ENCODE measurements at regions of chr19 and their contacts with region 1.

Region 1: DNA sequence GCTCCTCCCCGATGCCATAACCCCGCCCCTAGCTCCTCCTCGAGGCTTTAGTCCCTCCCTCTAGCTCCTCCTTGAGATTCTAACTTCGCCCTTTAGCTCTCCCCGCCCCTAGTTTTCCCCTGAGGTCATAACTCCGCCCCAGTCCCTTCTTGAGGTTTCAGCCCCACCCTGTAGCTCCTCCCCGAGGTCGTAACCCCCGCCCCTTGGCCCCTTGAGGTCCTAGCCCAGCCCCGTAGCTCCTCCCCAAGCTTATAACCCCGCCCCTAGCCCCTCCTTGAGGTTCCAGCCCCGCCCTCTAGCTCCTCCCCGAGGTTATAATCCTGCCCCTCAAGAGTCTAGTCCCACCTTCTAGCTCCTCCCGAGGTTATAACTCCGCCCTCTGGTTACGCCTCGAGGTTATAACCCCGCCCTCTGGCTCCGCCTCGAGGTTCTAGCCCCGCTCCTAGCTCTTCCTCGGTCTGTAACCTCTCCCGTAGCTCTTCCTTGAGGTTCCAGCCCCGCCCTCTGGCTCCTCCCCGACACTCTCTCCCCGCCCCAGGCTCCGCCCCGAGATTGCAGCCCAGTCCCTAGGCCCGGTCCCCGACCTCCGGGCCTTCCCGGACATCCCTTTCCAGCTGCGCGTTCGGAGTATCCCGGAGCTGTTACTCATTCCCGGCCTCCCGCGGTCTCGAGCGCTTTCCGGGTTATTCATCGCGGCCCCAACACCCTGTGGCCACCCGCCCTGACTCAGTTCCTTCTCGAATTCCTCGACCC is 1.4 kb downstream of the PLAUR start:
- DNase-seq: peak; percentile 100
- H3K4me3 ChIP-seq: peak overlapping the region; percentile 36 to 62 (median 56)
- H3K27ac ChIP-seq: peak overlapping the region; percentile 90 to 98 (median 92)
- H3K4me1 ChIP-seq: peaks cover 0 to 25% (median 20%) of the 10 kb centered on the region in 4 donors
- H3K27me3 ChIP-seq: no peaks in the 10 kb centered on the region
- CTCF ChIP-seq: no peak
- EP300 ChIP-seq: peak in 1 of 4 donors; percentile 25
- POLR2A ChIP-seq: peak; percentile 88 to 90

Region 2: DNA sequence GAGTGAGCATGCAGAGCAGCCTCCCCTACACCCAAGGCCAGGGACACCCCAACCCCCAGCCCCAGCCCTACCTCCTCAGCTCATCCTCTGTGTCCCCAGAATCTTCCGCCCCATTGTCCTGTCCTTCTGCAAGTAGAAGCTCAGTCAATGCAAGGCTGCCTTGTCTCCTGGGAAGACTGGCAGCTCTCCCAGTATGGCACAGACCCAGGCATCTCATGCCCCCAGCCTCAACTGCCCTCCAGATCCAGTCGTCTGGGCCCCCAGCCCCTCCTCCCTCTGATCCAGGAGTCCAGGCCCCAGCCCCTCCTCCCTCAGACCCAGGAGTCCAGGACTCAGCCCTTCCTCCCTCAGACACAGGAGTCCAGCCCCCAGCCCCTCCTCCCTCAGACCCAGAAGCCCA is 122.6 kb before region 1 on chr19:
- intact Hi-C with region 1: no loop called
- DNase-seq: no peak
- H3K4me3 ChIP-seq: no peak overlapping the region
- H3K27ac ChIP-seq: no peak overlapping the region
- H3K4me1 ChIP-seq: no peaks in the 10 kb centered on the region
- H3K27me3 ChIP-seq: no peaks in the 10 kb centered on the region
- CTCF ChIP-seq: no peak
- EP300 ChIP-seq: no peak
- POLR2A ChIP-seq: no peak

Region 3: DNA sequence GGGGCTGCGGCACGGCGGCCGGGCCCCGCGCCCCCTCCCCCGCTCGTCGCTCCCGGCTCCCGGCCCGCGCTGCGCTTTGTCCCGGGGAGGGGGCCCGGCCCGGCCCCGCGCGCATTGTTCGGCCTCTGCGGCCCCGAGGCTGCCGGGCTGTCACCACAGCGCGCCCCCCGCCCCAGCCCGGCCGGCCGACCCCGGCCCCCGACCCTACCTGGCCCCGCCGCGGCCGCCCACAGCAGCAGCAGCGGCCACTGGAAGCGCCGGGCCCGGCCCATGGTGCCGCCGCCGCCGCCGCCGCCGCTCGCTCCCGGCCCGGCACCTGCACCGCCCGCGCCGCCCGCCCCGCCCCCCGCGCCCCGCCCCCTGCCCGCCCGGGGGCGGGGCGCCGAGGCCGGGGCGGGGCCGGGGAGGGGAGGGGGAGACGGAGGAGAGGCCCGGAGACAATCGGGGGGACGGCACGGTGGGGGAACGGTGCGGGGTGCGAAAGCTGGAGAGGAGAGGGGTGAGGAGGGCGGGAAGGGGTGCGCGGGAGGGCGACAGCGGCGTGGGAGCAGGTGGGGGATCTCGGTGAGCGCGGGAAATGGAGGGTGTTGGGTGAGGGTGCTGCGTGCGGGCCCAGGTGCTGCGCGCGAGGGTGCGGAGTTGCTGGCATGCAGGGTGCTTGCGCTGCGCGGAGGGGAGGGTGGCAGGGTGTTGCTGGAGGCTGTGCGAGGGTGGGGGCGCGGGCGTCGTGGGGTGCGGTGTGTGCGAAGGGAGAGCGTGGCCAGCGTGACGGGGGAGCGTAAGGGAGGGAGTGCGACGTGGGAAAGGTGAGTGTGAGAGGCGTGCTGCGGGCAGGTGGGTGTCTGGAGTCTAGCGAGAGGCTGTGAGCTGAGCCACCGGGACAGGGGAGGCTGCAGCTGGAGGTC is 28.8 kb before region 1 on chr19 and contains the start of gene CADM4:
- intact Hi-C with region 1: loop called (anchors 2 kb)
- DNase-seq: peak; percentile 69
- H3K4me3 ChIP-seq: peak within 1 kb of the TSS; percentile 56 to 69 (median 62)
- H3K27ac ChIP-seq: peak within 1 kb of the TSS; percentile 54 to 73 (median 63)
- H3K4me1 ChIP-seq: peaks cover 0 to 19% (median 14%) of the 10 kb centered on the region in 4 donors
- H3K27me3 ChIP-seq: no peaks in the 10 kb centered on the region
- CTCF ChIP-seq: no peak
- EP300 ChIP-seq: no peak
- POLR2A ChIP-seq: no peak
- total RNA-seq, gene CADM4: 16.4 to 21.7 (median 19.7) TPM

Region 4: DNA sequence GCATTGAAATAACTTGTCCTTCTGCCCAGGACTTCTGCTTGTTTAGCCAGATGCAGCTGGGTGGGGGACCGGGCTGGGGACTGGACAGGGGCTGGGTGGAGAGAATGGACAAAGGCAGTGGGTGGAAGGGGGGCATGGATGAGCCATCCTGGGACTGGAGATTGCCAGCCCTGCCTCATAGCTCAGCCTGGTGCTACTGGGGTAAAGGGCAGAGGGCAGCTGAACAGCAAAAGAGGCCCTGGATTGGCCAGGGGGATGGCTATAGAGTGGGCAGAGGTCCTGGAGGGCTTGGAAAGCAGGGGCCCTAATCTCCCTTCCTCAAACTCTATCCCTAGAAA is 19.0 kb after region 1 on chr19:
- intact Hi-C with region 1: no loop called
- DNase-seq: no peak
- H3K4me3 ChIP-seq: no peak overlapping the region
- H3K27ac ChIP-seq: no peak overlapping the region
- H3K4me1 ChIP-seq: no peaks in the 10 kb centered on the region
- H3K27me3 ChIP-seq: no peaks in the 10 kb centered on the region
- CTCF ChIP-seq: no peak
- EP300 ChIP-seq: no peak
- POLR2A ChIP-seq: no peak

Region 5: DNA sequence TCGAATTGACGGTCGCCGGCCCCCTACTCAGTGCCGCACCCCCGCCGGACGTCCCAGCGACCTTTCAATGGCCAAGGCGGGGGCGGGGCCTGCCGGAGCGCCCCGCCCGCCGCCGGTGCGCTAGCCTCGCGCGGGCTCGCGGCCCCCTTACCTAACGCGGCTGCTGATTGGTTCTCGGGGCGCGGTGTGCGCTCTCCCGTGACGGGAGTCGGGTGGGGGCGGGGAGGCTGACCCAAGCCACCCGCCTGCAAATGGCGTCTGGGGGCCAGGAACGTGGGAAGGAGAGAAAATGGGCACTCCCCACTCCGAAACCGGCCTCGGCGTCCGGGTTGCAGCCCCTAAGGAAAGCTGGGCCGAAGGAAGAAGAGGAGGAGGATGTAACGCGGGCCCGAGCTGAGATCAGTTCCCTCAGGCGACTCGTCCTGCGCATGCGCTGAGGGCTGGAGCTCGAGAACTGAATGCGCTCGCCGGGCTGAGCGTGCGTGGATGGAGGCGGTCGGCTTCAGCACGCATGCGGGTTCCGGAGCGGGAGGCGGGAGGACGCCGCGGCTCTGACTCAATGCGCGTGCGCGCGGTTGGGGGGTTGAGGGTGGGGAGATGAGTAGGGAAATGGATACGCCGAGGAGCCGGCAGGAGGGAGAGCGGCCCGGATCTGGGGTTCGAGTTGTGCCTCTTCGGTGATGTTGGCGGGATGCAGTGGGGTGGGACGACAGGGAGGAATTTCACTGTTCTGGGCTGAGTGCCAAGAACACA is 86.1 kb after region 1 on chr19 and contains the start of gene SMG9:
- intact Hi-C with region 1: loop called (anchors 2 kb)
- DNase-seq: peak; percentile 99
- H3K4me3 ChIP-seq: peak within 1 kb of the TSS; percentile 67 to 78 (median 73)
- H3K27ac ChIP-seq: peak within 1 kb of the TSS; percentile 98 to 99 (median 99)
- H3K4me1 ChIP-seq: peaks cover 0 to 41% (median 28%) of the 10 kb centered on the region in 4 donors
- H3K27me3 ChIP-seq: no peaks in the 10 kb centered on the region
- CTCF ChIP-seq: no peak
- EP300 ChIP-seq: no peak
- POLR2A ChIP-seq: peak; percentile 34 to 76
- total RNA-seq, gene SMG9: 5.6 to 25.2 (median 13.8) TPM